GM18951 (cell line): ENCODE measurements at regions of chr11 and their contacts with region 1.

Region 1: GRCh38 chr11:120335908-120336640 is at the start of gene ARHGEF12:
- POLR2A ChIP-seq: peak; percentile 83

Region 2: GRCh38 chr11:120128782-120129172 is 207.3 kb before region 1 on chr11:
- in situ Hi-C with region 1: no loop called
- POLR2A ChIP-seq: no peak

Region 3: GRCh38 chr11:120929664-120930154 is 593.6 kb after region 1 on chr11:
- in situ Hi-C with region 1: loop called (anchors 25 kb)
- POLR2A ChIP-seq: no peak